ENCODE measurements at regions of chr4 and their contacts with region 1.

Region 1: DNA sequence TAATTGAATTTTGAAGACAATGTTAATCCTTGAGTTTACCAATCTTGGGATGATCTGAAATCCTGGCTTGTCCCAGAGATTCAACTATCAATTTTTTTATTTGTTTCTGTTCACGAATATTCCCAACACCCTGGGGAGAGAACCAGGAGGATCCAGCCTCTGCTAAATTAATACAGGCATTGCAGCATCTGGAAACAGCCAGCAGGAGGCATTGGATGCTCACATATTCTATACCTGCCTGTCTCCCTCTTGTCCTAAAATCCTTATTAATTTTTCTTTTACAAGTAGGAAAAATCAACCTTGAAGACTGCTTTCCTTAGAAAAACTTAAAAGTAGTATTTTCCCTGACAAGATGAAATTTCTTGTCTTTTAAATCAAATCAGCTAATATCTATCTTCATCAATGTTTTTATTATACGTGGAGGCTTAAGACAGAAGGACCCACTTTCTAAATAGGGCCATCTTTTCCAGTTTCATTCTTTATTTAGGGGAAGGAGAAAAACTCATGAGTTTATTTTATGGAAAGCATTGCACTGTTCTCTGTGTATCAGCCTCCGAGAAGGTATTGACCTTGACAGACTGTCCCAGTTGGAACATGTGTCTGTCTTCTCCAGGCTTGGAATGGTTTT is 102.4 kb downstream of the CLNK start:
- DNase-seq: no peak
- H3K4me3 Mint-ChIP-seq: no peak overlapping the region
- H3K27ac Mint-ChIP-seq: no peak overlapping the region
- H3K4me1 Mint-ChIP-seq: peaks cover 13% of the 10 kb centered on the region
- H3K27me3 Mint-ChIP-seq: peaks cover 2% of the 10 kb centered on the region

Region 2: GRCh38 chr4:10655986-10656385 is 73.8 kb after region 1 on chr4:
- intact Hi-C with region 1: loop called (anchors 1 kb)
- DNase-seq: no peak
- H3K4me3 Mint-ChIP-seq: peak overlapping the region; percentile 35
- H3K27ac Mint-ChIP-seq: peak overlapping the region; percentile 86
- H3K4me1 Mint-ChIP-seq: peaks cover 43% of the 10 kb centered on the region
- H3K27me3 Mint-ChIP-seq: no peaks in the 10 kb centered on the region

Region 3: GRCh38 chr4:10893395-10893794 is 311.2 kb after region 1 on chr4:
- intact Hi-C with region 1: loop called (anchors 5 kb)
- DNase-seq: no peak
- H3K4me3 Mint-ChIP-seq: no peak overlapping the region
- H3K27ac Mint-ChIP-seq: no peak overlapping the region
- H3K4me1 Mint-ChIP-seq: peaks cover 6% of the 10 kb centered on the region
- H3K27me3 Mint-ChIP-seq: peaks cover 4% of the 10 kb centered on the region

Region 4: GRCh38 chr4:10949039-10949733 is 367.0 kb after region 1 on chr4:
- intact Hi-C with region 1: loop called (anchors 5 kb)
- DNase-seq: no peak
- H3K4me3 Mint-ChIP-seq: no peak overlapping the region
- H3K27ac Mint-ChIP-seq: no peak overlapping the region
- H3K4me1 Mint-ChIP-seq: peaks cover 12% of the 10 kb centered on the region
- H3K27me3 Mint-ChIP-seq: peaks cover 8% of the 10 kb centered on the region

Region 5: GRCh38 chr4:11424000-11424399 is 841.8 kb after region 1 on chr4:
- intact Hi-C with region 1: loop called (anchors 1 kb)
- DNase-seq: no peak
- H3K4me3 Mint-ChIP-seq: no peak overlapping the region
- H3K27ac Mint-ChIP-seq: no peak overlapping the region
- H3K4me1 Mint-ChIP-seq: no peaks in the 10 kb centered on the region
- H3K27me3 Mint-ChIP-seq: peaks cover 28% of the 10 kb centered on the region

Region 6: DNA sequence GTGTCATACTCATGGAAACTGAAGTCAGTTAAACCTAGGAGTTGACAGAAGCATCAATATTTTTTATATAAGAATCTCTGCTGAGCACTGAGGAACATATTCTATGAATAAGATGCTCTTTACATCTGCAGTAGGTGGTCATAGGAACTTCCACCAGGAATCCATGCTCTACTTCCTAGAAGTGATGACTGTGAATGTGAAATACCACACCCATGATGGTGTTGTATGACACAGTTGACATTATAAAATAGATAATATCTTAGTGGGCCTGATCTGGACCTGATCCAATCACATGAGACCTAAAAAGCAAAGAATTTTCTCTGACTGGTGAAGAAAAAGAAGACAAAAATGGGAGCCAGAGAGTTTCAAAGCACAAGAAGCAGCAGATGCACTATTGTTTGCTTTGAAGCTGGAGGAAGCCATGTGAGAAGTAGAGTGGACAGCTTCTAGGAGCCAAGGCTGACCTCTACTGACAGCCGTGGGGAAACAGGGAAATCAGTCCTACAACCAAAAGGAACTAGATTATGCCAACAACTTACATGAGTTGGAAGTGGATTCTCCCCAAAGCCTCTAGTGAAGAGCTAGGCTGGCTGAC is 915.1 kb after region 1 on chr4:
- intact Hi-C with region 1: loop called (anchors 5 kb)
- DNase-seq: no peak
- H3K4me3 Mint-ChIP-seq: no peak overlapping the region
- H3K27ac Mint-ChIP-seq: no peak overlapping the region
- H3K4me1 Mint-ChIP-seq: peaks cover 6% of the 10 kb centered on the region
- H3K27me3 Mint-ChIP-seq: peaks cover 4% of the 10 kb centered on the region

Region 7: GRCh38 chr4:11720292-11720691 is 1138.1 kb after region 1 on chr4:
- intact Hi-C with region 1: loop called (anchors 5 kb)
- DNase-seq: no peak
- H3K4me3 Mint-ChIP-seq: no peak overlapping the region
- H3K27ac Mint-ChIP-seq: no peak overlapping the region
- H3K4me1 Mint-ChIP-seq: no peaks in the 10 kb centered on the region
- H3K27me3 Mint-ChIP-seq: no peaks in the 10 kb centered on the region